Breast epithelium (tissue), 4 donors: ENCODE measurements at regions of chr11 and their contacts with region 1.

Region 1: GRCh38 chr11:91997226-91997625 is 227.4 kb upstream of the FAT3 start:
- DNase-seq: no peak
- H3K4me3 ChIP-seq: no peak overlapping the region
- H3K27ac ChIP-seq: no peak overlapping the region
- H3K4me1 ChIP-seq: no peaks in the 10 kb centered on the region
- H3K27me3 ChIP-seq: no peaks in the 10 kb centered on the region
- CTCF ChIP-seq: no peak
- POLR2A ChIP-seq: no peak

Region 2: DNA sequence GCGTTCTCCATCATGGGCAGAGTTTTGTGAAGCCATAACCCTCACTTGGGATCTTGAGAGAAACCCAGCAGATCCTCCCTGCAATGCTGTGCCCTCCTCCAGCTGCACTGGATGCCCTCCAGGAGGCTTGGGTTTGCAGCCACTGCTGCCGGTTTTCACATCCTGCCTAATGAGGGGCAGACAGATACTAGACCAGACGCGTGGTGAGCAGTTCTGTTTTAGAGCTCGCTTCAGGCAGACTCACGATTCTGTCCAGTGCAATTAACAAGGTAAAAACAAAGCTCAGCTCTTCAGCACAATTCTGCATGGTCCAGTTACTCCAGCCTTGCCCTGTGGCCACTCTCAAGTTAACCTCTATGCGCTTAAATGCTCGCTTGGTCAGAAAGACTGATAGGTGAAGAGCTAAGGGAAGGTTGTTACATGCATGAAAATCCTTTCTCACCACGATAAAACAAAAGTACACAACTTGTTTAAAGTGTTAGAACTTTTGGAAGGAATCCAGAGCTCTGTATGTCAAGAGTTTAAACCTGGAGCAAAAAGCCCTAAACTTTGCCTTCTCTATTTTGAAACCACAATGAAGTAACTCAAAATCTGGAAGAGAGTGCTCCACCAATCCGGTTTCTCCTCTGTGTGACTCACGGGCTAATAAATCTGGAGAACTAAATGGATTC is 64.9 kb before region 1 on chr11:
- intact Hi-C with region 1: no loop called
- DNase-seq: no peak
- H3K4me3 ChIP-seq: no peak overlapping the region
- H3K27ac ChIP-seq: no peak overlapping the region
- H3K4me1 ChIP-seq: no peaks in the 10 kb centered on the region
- H3K27me3 ChIP-seq: no peaks in the 10 kb centered on the region
- CTCF ChIP-seq: no peak
- POLR2A ChIP-seq: no peak

Region 3: DNA sequence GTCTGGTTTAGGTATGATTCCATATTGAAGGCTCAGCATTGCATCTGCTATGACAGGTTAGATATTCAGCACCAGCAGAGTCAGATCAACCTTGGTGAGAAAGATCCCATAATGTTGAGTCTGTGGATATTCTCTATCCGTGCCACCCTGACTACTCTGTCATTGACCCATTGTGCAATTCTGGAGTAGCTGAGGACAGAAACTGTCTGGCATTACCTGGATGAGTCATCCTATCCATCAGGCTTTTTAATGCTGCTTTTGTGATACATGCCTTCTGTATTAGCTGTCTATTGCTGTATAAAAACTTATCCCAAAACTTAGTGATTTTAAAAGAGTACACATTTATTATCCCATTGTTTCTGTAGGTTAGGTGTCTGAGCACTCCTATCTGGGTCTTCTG is 38.3 kb after region 1 on chr11:
- intact Hi-C with region 1: loop called (anchors 2 kb)
- DNase-seq: no peak
- H3K4me3 ChIP-seq: no peak overlapping the region
- H3K27ac ChIP-seq: no peak overlapping the region
- H3K4me1 ChIP-seq: no peaks in the 10 kb centered on the region
- H3K27me3 ChIP-seq: no peaks in the 10 kb centered on the region
- CTCF ChIP-seq: no peak
- POLR2A ChIP-seq: no peak